ENCODE measurements at regions of chr5 and their contacts with region 1.

Region 1: GRCh38 chr5:100731768-100732167 is 171.3 kb downstream of the ST8SIA4 start:
- DNase-seq: no peak
- ATAC-seq: peak; percentile 56
- H3K4me3 Mint-ChIP-seq: peak overlapping the region; percentile 62
- H3K27ac Mint-ChIP-seq: peak overlapping the region; percentile 14
- H3K4me1 Mint-ChIP-seq: peaks cover 7% of the 10 kb centered on the region
- H3K27me3 Mint-ChIP-seq: no peaks in the 10 kb centered on the region
- CTCF ChIP-seq: no peak

Region 2: GRCh38 chr5:100746730-100747129 is 15.0 kb after region 1 on chr5:
- CTCF ChIA-PET with region 1: no interaction called
- POLR2A ChIA-PET with region 1: no interaction called
- intact Hi-C with region 1: loop called (anchors 2 kb)
- DNase-seq: no peak
- ATAC-seq: peak; percentile 49
- H3K4me3 Mint-ChIP-seq: peak overlapping the region; percentile 35
- H3K27ac Mint-ChIP-seq: no peak overlapping the region
- H3K4me1 Mint-ChIP-seq: peaks cover 10% of the 10 kb centered on the region
- H3K27me3 Mint-ChIP-seq: peaks cover 7% of the 10 kb centered on the region
- CTCF ChIP-seq: no peak